Left ventricle myocardium superior (tissue), 1 donor: ENCODE measurements at regions of chr16 and their contacts with region 1.

Region 1: GRCh38 chr16:71461686-71462648 is at the start of gene ZNF23:
- DNase-seq: peak; percentile 91
- ATAC-seq: peak; percentile 100
- total RNA-seq, gene ZNF23: 5.4 TPM

Region 2: DNA sequence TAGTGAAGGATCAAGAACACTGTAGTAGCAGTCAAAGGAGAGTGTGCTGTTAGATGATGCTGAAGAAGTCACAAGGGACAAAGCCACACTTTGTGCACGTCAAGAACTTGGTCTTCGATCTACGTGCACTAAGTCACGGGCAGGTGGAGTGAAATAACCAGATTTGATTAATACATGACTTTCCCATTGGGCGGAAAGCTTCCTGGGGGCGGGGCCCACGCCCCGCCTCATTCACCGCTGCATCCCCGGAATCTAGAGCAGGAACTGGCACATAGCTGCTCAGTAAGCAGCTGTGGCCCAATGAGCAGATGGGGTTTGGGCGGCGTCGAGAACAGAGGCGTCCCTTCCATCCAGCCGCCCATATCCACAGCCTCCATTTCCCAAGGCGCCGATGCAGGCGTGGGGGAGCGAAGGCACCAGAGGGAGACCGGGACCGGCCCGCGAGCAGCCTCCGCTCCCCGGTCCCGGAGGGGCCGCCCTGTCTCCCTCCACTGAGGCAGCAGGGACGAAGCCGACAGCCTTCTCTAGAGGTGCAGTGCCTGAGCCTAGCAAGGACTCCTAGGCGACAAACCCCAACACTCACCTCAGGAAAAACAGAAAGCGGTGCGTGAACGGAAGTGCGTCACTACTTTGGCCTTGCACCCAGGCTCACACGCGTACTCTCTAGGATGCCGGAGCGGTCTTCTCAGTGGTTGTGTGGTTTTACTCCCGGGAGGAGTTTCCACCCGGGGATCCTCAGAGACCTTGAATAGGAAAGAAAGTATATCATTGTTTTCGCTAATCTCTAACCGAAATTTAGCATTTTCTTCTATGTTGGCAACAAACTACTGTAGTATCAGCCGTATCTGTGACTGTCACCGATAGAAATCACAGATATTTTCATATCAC is 22.3 kb after region 1 on chr16:
- intact Hi-C with region 1: loop called (anchors 1 kb)
- DNase-seq: peak; percentile 89
- ATAC-seq: peak; percentile 99

Region 3: GRCh38 chr16:71499775-71500364 is 37.9 kb after region 1 on chr16:
- intact Hi-C with region 1: no loop called
- DNase-seq: no peak
- ATAC-seq: no peak

Region 4: GRCh38 chr16:71526111-71526631 is 64.2 kb after region 1 on chr16 and contains the start of gene CHST4:
- intact Hi-C with region 1: no loop called
- DNase-seq: no peak
- ATAC-seq: no peak
- total RNA-seq, gene CHST4: not detected

Region 5: DNA sequence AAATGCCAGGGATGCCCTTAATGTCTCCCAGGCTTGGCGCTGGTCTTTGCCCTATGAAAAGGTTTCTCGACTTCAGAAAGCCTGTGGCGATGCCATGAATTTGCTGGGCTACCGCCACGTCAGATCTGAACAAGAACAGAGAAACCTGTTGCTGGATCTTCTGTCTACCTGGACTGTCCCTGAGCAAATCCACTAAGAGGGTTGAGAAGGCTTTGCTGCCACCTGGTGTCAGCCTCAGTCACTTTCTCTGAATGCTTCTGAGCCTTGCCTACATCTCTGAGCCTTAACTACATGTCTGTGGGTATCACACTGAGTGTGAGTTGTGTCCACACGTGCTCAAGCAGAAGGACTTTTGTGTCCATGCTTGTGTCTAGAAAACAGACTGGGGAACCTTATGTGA is 75.7 kb after region 1 on chr16:
- intact Hi-C with region 1: no loop called
- DNase-seq: no peak
- ATAC-seq: no peak

Region 6: GRCh38 chr16:71610936-71611871 is 149.2 kb after region 1 on chr16:
- intact Hi-C with region 1: no loop called
- DNase-seq: peak; percentile 71
- ATAC-seq: peak; percentile 71